Activated CD4-positive, alpha-beta T cell treated with anti-CD3 and anti-CD28 coated beads for 36 hours (primary cell): ENCODE measurements at regions of chr5 and their contacts with region 1.

Region 1: DNA sequence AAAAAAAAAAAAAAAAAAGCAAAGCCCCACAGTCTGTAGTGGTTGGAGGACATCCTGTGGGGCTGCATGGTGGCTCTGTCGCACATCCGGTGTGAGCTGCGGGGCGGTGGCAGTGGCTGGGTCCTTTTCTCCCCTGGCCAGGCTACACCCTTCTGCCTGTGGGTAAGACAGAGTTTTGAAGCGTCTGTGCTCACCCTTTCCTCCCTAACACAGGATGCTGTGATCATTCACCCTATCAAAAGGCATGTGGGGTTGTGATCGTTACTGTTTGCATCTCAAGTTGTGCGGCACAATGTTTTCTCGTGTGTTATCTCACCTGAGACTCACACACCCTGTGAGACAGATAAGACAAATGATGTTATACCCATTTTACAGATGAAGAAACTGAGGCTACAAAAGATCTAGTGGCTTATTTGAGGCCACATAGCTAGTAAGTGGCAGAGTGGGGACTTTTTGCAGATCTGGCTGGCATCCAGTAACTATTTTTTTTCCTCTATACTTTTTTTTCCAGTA is 17.5 kb downstream of the IRF1 start:
- DNase-seq: peak; percentile 83
- ATAC-seq: peak; percentile 94
- H3K4me3 Mint-ChIP-seq: no peak overlapping the region
- H3K27ac Mint-ChIP-seq: peak overlapping the region; percentile 93
- H3K4me1 Mint-ChIP-seq: peaks cover 59% of the 10 kb centered on the region
- H3K27me3 Mint-ChIP-seq: no peaks in the 10 kb centered on the region

Region 2: GRCh38 chr5:132419502-132420468 is 53.3 kb before region 1 on chr5:
- CTCF ChIA-PET with region 1: interaction called, 15 read pairs
- POLR2A ChIA-PET with region 1: interaction called, 95 read pairs
- intact Hi-C with region 1: no loop called
- DNase-seq: peak; percentile 75
- ATAC-seq: peak; percentile 65
- H3K4me3 Mint-ChIP-seq: peak overlapping the region; percentile 37
- H3K27ac Mint-ChIP-seq: peak overlapping the region; percentile 90
- H3K4me1 Mint-ChIP-seq: peaks cover 83% of the 10 kb centered on the region
- H3K27me3 Mint-ChIP-seq: no peaks in the 10 kb centered on the region

Region 3: GRCh38 chr5:132566657-132567056 is 93.6 kb after region 1 on chr5:
- CTCF ChIA-PET with region 1: no interaction called
- POLR2A ChIA-PET with region 1: no interaction called
- intact Hi-C with region 1: no loop called
- DNase-seq: no peak
- ATAC-seq: peak; percentile 83
- H3K4me3 Mint-ChIP-seq: no peak overlapping the region
- H3K27ac Mint-ChIP-seq: peak overlapping the region; percentile 11
- H3K4me1 Mint-ChIP-seq: peaks cover 47% of the 10 kb centered on the region
- H3K27me3 Mint-ChIP-seq: no peaks in the 10 kb centered on the region

Region 4: GRCh38 chr5:132629230-132629944 is 156.3 kb after region 1 on chr5:
- CTCF ChIA-PET with region 1: no interaction called
- POLR2A ChIA-PET with region 1: no interaction called
- intact Hi-C with region 1: no loop called
- DNase-seq: no peak
- ATAC-seq: peak; percentile 19
- H3K4me3 Mint-ChIP-seq: no peak overlapping the region
- H3K27ac Mint-ChIP-seq: no peak overlapping the region
- H3K4me1 Mint-ChIP-seq: peaks cover 8% of the 10 kb centered on the region
- H3K27me3 Mint-ChIP-seq: no peaks in the 10 kb centered on the region

Region 5: GRCh38 chr5:132673939-132674630 is 201.0 kb after region 1 on chr5 and contains the start of gene IL4:
- CTCF ChIA-PET with region 1: no interaction called
- POLR2A ChIA-PET with region 1: no interaction called
- intact Hi-C with region 1: no loop called
- DNase-seq: no peak
- ATAC-seq: no peak
- H3K4me3 Mint-ChIP-seq: no peak within 1 kb of the TSS
- H3K27ac Mint-ChIP-seq: peak within 1 kb of the TSS; percentile 48
- H3K4me1 Mint-ChIP-seq: peaks cover 22% of the 10 kb centered on the region
- H3K27me3 Mint-ChIP-seq: no peaks in the 10 kb centered on the region
- total RNA-seq, gene IL4: 0.32 to 0.77 TPM